HEK293 (cell line): ENCODE measurements at regions of chr22 and their contacts with region 1.

Region 1: DNA sequence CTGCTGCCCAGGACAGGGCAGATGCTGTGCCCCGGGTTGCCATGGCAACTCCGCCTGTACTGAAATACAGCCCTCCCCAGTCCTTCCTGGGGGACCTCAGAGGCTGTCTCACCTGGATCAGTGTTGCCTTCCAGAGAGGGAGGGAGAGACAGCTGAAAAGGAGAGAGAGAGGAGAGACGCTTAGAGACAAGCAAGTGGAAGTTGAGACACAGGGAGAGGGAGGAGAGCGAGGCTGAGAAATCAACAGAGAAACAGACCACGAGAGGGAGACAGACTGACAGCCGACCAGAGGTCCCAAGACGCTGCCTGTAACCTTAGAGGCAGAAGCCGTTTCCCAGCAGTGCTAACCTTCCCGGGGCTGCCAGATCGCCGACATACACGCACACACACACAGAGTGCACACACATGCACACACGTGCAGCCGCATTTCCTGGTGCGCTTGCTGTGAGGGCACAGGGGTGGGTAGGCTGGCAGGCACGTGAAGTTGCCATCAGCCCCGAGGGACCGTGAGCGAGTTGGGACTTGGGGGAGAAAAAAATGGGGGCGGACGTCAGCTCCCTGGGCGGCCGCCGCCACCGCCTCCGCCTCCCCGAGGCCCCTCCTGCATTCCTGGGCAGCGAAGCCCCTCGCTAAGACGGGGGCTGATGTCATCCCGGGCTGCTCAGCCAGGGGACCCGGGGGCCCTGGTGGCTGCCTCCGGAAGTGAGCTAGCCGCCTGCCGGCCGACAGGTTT is 88.6 kb upstream of the CRYBB3 start:
- H3K4me3 ChIP-seq: peak overlapping the region; percentile 74
- H3K27ac ChIP-seq: peak overlapping the region; percentile 57
- H3K4me1 ChIP-seq: peaks cover 4% of the 10 kb centered on the region; the same call in 1 of the 2 replicates
- CTCF ChIP-seq: peak; percentile 94

Region 2: DNA sequence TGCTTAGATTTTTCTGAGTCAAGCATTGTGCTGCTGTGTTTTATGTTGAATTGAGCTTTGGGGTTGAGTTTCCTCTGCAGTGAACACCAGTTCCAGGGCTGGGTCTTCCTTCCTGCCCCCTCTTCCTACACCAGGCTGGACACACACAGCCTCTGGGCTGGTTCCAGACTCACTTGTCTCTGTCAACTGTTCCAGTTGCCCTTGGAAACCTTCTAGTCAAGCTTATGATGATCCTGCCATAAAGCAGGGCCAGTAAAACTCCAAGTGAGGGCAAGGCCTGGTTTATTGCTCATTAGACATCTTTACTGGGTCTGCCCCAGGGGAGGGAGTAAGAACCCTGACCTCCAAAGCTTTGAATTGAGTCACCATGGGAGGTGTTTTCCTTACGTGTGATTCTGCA is 97.4 kb before region 1 on chr22:
- CTCF ChIA-PET with region 1: no interaction called
- POLR2A ChIA-PET with region 1: no interaction called
- H3K4me3 ChIP-seq: no peak overlapping the region
- H3K27ac ChIP-seq: no peak overlapping the region
- H3K4me1 ChIP-seq: peaks cover 11% of the 10 kb centered on the region
- CTCF ChIP-seq: no peak

Region 3: GRCh38 chr22:25127318-25127717 is 16.3 kb after region 1 on chr22:
- CTCF ChIA-PET with region 1: interaction called, 11 read pairs
- POLR2A ChIA-PET with region 1: no interaction called
- H3K4me3 ChIP-seq: no peak overlapping the region
- H3K27ac ChIP-seq: no peak overlapping the region
- H3K4me1 ChIP-seq: no peaks in the 10 kb centered on the region
- CTCF ChIP-seq: no peak

Region 4: DNA sequence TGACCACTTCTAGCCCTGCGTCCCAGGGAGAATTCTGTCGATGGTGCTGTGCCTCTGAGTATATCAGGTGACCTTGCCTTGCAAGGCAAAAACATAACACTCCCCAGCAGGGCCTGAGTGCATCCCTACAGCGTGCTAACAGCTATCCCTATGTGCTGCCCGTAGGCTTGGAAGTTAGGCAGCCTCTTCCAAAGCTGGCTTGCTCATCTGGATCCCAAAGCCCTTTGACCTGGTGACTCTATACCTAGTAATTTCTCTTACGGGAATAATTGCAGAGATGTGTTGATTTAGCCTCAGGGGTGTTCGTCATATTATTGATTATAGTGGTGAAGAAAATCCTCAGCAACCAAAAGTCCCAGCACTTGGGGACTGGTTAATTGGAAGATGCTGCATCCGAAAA is 56.1 kb after region 1 on chr22:
- CTCF ChIA-PET with region 1: interaction called, 12 read pairs
- POLR2A ChIA-PET with region 1: interaction called, 4 read pairs
- H3K4me3 ChIP-seq: no peak overlapping the region
- H3K27ac ChIP-seq: no peak overlapping the region
- H3K4me1 ChIP-seq: 0 out of 2 replicates have a peak, but pooled peaks cover 4% of the 10 kb centered on the region
- CTCF ChIP-seq: no peak

Region 5: DNA sequence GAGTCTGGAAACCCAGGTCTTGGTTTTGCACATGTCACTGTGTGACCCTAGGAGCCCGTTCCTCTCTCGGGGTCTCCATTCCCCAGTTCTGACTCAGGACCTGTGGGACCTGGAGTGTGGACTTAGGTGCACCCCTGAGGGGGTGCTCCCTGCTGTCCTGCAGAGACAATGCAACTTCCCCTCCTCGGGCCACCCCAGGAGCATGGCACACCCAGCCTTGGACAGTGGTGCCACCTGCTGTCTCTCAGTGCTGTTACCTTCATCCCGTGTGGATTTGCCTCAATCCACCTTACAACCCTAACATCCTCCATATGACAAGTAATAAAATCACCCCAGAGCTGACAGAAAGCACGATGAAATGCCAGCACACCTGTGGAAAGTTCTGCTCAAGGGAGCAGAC is 61.1 kb after region 1 on chr22:
- CTCF ChIA-PET with region 1: interaction called, 11 read pairs
- POLR2A ChIA-PET with region 1: interaction called, 3 read pairs
- H3K4me3 ChIP-seq: no peak overlapping the region
- H3K27ac ChIP-seq: no peak overlapping the region
- H3K4me1 ChIP-seq: no peaks in the 10 kb centered on the region
- CTCF ChIP-seq: peak; percentile 63